Activated CD8-positive, alpha-beta T cell treated with anti-CD3 and anti-CD28 coated beads for 36 hours (primary cell): ENCODE measurements at regions of chr12 and their contacts with region 1.

Region 1: DNA sequence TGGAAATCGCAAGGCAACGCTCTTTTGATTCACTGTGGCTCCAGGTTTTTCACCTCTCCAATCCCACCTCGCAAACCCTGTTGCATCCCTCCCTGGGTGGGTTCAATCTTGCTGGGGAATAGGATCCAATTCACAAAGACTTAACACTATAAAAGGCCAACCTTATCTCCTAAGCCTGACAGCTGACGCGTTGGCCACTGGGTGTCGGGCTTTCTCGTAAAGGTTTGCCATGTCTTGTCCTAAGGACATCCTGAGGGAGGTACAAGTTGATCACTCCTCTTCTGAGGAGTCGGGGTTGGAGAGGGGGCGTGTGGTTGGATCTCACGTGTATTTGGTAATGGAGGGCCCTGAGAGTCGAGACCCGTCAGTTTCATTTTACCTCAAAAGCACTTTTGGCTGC is 112.6 kb upstream of the FZD10 start:
- DNase-seq: no peak
- ATAC-seq: no peak
- H3K4me3 Mint-ChIP-seq: no peak overlapping the region
- H3K27ac Mint-ChIP-seq: no peak overlapping the region
- H3K4me1 Mint-ChIP-seq: peaks cover 3% of the 10 kb centered on the region
- H3K27me3 Mint-ChIP-seq: peaks cover 25% of the 10 kb centered on the region
- CTCF ChIP-seq: no peak

Region 2: DNA sequence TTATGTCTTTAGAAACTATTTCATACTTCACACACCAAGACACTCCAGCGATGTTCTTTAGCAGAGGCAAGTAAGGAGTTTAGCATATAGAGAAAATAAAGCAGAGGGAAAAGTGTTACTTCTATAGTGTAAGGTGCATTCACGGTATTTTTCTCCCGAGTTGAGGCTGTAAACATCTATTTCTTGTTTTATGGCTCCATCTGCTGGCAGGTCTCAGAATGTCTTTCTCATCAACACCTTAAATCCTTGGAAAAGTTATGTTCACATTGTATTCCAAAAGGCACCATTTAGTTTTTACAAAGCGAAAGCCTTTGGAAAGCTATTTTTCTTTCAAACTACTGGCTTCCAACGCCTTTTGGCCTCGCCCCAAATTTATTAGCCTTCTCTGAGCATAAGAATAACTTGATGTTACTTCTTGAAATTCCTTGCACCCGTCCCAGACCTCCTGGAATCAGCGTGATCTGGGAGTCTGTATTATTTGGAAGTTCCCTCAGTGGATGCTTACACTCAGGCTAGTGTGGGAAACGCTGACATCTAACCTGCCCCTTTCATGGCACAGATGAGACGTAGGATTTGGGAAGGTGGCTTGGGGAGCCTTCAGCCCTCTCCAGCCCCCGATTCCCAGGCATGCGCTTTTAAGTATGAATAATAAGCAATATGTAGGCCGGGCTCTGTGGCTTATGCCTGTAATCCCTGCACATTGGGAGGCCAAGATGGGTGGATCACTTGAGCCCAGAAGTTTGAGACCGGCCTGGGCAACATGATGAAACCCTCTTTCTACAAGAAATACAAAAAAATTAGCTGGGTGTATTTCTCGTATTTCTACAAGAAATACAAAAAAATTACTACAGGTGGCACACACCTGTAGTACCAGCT is 286.1 kb after region 1 on chr12:
- CTCF ChIA-PET with region 1: interaction called, 21 read pairs
- POLR2A ChIA-PET with region 1: no interaction called
- intact Hi-C with region 1: loop called (anchors 2 kb)
- DNase-seq: peak; percentile 47
- ATAC-seq: no peak
- H3K4me3 Mint-ChIP-seq: no peak overlapping the region
- H3K27ac Mint-ChIP-seq: no peak overlapping the region
- H3K4me1 Mint-ChIP-seq: peaks cover 3% of the 10 kb centered on the region
- H3K27me3 Mint-ChIP-seq: peaks cover 28% of the 10 kb centered on the region
- CTCF ChIP-seq: peak; percentile 77